GM10248 (cell line): ENCODE measurements at regions of chr9 and their contacts with region 1.

Region 1: DNA sequence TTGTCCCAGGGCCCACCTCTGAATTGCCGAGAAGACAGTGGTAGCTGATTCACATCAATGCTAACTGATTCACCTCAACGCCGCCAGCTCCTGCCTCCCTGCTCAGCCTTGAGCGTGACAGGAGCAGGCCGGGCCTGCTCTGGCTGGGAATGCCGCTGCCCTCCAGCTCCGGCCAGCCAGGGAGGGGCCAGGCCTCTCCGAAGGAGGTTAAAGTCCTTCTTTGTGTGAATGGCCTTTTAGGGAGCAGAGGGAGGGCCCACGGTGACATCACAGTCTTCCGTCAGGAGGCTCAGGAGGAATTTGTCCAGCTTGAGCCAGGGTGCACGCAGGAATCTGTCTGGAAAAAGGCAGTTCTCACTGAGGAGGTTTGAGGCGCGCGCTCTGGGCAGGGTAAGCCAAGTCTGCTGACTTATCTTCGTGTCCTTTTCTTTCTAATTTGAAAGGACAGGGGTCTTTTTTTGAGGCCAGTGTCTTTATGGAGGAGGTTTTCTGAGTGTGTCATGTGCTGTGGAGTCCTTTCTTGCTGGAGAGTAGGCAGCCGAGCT is 82.7 kb downstream of the C9orf152 start:
- DNase-seq: no peak
- CTCF ChIP-seq: no peak

Region 2: GRCh38 chr9:110058304-110058953 is 66.8 kb before region 1 on chr9:
- CTCF ChIA-PET with region 1: no interaction called
- POLR2A ChIA-PET with region 1: no interaction called
- DNase-seq: peak; percentile 53
- CTCF ChIP-seq: peak; percentile 64

Region 3: DNA sequence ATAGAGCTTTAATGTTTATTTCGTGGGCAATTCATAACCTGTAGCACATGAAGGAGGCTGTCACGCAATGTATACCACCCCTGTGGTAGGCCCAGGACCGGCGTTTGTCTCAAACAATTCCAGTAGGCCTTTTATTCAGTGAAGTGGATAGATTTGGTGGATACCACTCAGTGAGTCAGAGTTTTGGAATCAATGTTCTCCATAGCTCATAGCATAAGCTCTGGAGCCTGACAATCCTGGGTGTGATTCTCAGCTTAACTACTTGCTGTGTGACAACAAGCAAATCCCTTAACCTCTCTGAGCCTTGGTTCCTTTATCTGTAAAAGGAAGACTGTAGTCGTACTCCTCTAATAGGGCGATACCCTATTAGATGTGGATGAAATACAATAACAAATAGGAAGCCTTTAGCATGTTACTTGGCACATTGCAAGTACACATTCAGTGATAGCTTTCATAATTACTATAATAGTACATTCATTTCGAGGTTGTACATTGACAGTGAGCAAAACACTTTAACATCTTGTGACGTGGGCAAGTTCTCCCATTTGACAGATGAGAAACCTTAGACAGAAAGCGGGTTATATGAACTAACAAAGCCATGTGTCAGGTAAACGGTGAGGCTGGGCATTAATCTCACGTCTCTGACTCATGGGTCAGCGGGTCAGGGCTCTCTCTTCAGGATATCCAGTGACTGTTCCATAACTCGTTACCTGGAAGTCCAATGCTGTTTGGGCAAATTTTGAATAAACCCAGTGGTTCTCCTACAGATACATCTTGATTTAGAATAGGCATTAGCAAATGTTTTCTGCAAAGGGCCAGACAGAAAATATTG is 48.2 kb before region 1 on chr9:
- CTCF ChIA-PET with region 1: no interaction called
- POLR2A ChIA-PET with region 1: no interaction called
- DNase-seq: no peak
- CTCF ChIP-seq: no peak

Region 4: GRCh38 chr9:110099236-110100095 is 25.8 kb before region 1 on chr9:
- CTCF ChIA-PET with region 1: interaction called, 14 read pairs
- POLR2A ChIA-PET with region 1: no interaction called
- DNase-seq: no peak
- CTCF ChIP-seq: no peak

Region 5: GRCh38 chr9:110110154-110110553 is 15.1 kb before region 1 on chr9:
- CTCF ChIA-PET with region 1: interaction called, 23 read pairs
- POLR2A ChIA-PET with region 1: interaction called, 3 read pairs
- DNase-seq: peak; percentile 40
- CTCF ChIP-seq: no peak

Region 6: GRCh38 chr9:110143950-110144545 is 18.8 kb after region 1 on chr9:
- CTCF ChIA-PET with region 1: interaction called, 15 read pairs
- POLR2A ChIA-PET with region 1: interaction called, 10 read pairs
- DNase-seq: no peak
- CTCF ChIP-seq: no peak